Naive thymus-derived CD4-positive, alpha-beta T cell (primary cell): ENCODE measurements at regions of chr12 and their contacts with region 1.

Region 1: DNA sequence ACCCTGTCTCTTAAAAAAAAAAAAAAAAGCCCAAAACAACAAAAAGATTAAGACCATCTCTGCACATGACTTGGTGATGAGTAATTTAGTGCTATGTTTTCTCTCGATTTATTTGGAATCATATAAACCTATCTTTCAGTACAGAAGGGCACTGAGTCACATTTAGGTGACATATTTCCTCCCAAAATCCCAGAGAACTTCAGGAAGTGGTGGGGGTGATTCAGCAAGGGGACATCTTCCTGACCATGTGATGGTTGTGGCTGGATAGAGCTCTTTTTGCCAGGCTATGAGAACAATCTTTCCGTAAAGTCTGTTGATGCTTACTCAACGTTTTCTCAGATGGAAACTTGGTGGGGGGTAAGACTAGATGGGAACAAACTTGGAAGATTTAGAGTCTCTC is 50.0 kb downstream of the PPFIBP1 start:
- DNase-seq: no peak
- ATAC-seq: no peak
- H3K4me3 ChIP-seq: no peak overlapping the region
- H3K4me3 Mint-ChIP-seq: no peak overlapping the region
- H3K27ac ChIP-seq: no peak overlapping the region
- H3K27ac Mint-ChIP-seq: no peak overlapping the region
- H3K4me1 ChIP-seq: no peaks in the 10 kb centered on the region
- H3K4me1 Mint-ChIP-seq: peaks cover 0 to 11% (median 0%) of the 10 kb centered on the region in 7 donors
- H3K27me3 ChIP-seq: no peaks in the 10 kb centered on the region
- H3K27me3 Mint-ChIP-seq: no peaks in the 10 kb centered on the region

Region 2: GRCh38 chr12:27064397-27065342 is 509.3 kb before region 1 on chr12:
- CTCF ChIA-PET with region 1: no interaction called
- POLR2A ChIA-PET with region 1: no interaction called
- intact Hi-C with region 1: loop called in 1 of 2 experiments (anchors 5 kb)
- DNase-seq: no peak
- ATAC-seq: peak; percentile 44
- H3K4me3 ChIP-seq: no peak overlapping the region
- H3K4me3 Mint-ChIP-seq: no peak overlapping the region
- H3K27ac ChIP-seq: no peak overlapping the region
- H3K27ac Mint-ChIP-seq: no peak overlapping the region
- H3K4me1 ChIP-seq: no peaks in the 10 kb centered on the region
- H3K4me1 Mint-ChIP-seq: no peaks in the 10 kb centered on the region
- H3K27me3 ChIP-seq: no peaks in the 10 kb centered on the region
- H3K27me3 Mint-ChIP-seq: no peaks in the 10 kb centered on the region

Region 3: DNA sequence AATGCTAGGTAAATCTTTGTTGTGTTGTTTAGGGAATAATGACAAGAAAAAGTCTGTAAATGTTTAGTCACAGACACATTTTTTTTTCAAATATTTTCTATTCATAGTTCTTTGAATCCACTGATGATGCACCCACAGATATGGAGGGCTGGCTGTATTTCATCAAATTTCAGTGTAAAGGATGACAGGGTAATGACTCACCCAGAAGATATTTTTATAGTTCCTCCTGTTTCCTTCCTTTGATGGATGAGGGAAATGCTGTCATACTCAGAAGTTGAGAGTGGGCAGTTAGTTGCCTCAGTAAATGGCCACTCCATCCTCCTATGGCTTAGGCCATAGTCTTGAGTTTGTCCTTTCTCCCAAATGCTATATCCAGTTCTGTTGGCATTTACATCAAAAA is 45.3 kb after region 1 on chr12:
- CTCF ChIA-PET with region 1: no interaction called
- POLR2A ChIA-PET with region 1: no interaction called
- intact Hi-C with region 1: no loop called
- DNase-seq: no peak
- ATAC-seq: peak; percentile 61
- H3K4me3 ChIP-seq: no peak overlapping the region
- H3K4me3 Mint-ChIP-seq: no peak overlapping the region
- H3K27ac ChIP-seq: no peak overlapping the region
- H3K27ac Mint-ChIP-seq: no peak overlapping the region
- H3K4me1 ChIP-seq: no peaks in the 10 kb centered on the region
- H3K4me1 Mint-ChIP-seq: peaks cover 0 to 13% (median 4%) of the 10 kb centered on the region in 7 donors
- H3K27me3 ChIP-seq: no peaks in the 10 kb centered on the region
- H3K27me3 Mint-ChIP-seq: peaks cover 0 to 4% (median 0%) of the 10 kb centered on the region in 5 donors

Region 4: DNA sequence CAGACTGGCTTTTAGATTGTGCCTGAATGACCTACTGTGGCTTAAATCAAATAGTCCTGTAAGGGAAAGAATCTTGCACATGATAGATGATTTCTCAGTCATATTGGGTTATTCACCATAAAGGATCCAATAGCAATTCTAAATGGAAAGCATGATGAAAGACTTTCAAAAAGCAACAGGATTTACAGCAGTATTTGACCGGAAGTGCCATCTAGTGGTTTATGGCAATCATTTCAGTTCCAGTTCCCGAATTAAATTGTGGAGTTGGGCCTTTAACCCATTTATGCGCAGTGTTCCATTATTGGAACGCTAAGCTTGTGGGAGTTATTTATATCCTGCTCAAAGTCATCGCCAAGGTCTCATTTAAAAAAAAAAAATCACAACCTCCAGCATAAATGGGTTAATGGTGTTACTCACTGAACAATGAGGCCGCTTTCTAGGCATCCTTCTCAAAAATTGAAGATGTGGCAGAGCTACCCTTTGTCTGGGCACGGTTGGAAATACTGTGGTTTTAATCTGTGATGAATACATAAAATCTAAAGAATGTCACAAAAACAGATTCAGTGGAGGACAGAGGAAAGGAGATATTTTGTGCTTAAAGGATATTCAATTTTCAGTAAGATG is 61.5 kb after region 1 on chr12:
- CTCF ChIA-PET with region 1: interaction called, 3 read pairs
- POLR2A ChIA-PET with region 1: interaction called, 3 read pairs
- intact Hi-C with region 1: loop called in 1 of 2 experiments (anchors 2 kb)
- DNase-seq: no peak
- ATAC-seq: no peak
- H3K4me3 ChIP-seq: no peak overlapping the region
- H3K4me3 Mint-ChIP-seq: no peak overlapping the region
- H3K27ac ChIP-seq: no peak overlapping the region
- H3K27ac Mint-ChIP-seq: no peak overlapping the region
- H3K4me1 ChIP-seq: no peaks in the 10 kb centered on the region
- H3K4me1 Mint-ChIP-seq: peaks cover 0 to 7% (median 0%) of the 10 kb centered on the region in 7 donors
- H3K27me3 ChIP-seq: no peaks in the 10 kb centered on the region
- H3K27me3 Mint-ChIP-seq: no peaks in the 10 kb centered on the region

Region 5: DNA sequence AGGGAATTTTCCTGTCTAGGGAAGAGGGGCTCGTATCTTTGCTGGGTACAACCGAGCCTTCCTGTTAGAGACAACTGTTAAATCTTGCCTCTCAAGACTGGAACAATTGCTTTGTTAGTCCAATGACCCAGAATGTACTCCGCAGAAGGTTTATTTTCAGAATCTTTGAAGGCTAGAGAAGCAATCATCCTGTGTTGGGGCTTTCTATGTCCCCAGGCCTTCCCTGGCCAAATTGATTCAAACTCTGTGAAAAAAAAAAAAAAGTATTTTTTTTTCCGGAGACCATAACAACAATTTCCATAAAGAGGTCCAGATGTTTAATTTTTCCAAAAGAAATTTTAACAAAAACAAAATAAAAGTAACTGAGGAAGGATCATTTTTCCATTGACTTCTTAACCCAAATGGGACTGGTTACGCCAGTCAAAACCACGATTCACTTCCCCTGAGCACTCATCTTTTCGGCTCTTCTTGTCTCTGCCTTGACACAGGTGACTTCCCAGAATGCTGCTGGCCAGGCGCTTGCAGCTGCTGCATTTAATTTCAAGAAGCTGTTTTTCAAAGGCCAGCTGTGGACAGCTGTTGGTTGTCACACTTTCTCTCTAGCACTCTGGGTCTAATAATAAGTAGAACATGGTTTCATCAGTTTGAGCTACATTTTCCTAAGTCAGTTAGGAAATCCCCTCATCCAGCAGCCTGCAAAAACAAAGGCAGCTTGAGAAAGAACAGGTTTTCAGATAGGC is 287.6 kb after region 1 on chr12:
- CTCF ChIA-PET with region 1: no interaction called
- POLR2A ChIA-PET with region 1: no interaction called
- intact Hi-C with region 1: no loop called
- DNase-seq: no peak
- ATAC-seq: no peak
- H3K4me3 ChIP-seq: no peak overlapping the region
- H3K4me3 Mint-ChIP-seq: no peak overlapping the region
- H3K27ac ChIP-seq: no peak overlapping the region
- H3K27ac Mint-ChIP-seq: no peak overlapping the region
- H3K4me1 ChIP-seq: no peaks in the 10 kb centered on the region
- H3K4me1 Mint-ChIP-seq: peaks cover 0 to 11% (median 5%) of the 10 kb centered on the region in 7 donors
- H3K27me3 ChIP-seq: no peaks in the 10 kb centered on the region
- H3K27me3 Mint-ChIP-seq: peaks cover 4 to 13% (median 6%) of the 10 kb centered on the region in 5 donors